HCT116 (cell line): ENCODE measurements at regions of chr3 and their contacts with region 1.

Region 1: DNA sequence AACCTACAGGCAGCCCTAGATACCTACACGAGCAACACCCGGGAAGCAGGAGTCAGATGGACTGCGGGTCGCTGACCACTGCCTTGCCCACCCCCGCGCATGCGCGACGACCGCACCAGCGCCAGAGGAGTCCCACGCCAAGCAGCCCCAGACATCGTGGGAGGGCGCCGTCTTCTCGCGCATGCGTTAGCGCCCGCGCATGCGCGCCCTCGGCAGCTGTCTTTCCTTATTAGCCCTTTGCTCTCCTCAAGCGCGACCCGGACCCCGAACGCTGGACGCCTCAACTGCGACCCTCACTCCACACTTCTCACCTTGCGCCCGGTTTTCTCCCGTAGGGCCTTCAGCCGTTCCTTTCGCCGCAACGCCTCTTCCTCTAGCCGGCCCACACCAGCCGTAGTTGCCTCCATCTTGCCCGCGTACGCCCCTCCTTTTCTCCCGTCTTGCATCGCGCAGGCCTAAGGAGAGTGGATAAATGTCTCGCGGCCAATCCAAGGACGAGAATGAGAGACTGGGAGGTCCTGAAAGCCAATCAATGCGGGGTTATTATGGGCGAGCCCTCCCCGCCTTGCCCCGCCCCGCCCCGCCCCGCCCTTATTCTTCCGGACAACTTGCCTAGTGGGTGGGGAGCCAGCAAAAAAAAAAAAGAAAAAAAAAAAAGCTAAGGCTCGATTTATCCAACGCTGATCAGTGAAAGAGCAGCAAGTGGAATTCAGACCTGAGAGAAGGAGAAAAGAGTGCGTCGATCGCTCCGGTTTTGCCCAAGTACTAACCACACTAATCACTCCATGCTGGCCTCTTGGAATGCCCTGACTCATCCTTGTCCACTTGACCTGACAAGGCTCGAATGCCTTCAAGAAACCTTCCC is at the start of gene CCDC12:
- DNase-seq: peak; percentile 97
- ATAC-seq: peak; percentile 78
- H3K4me3 ChIP-seq: peak within 1 kb of the TSS; percentile 69 to 74
- H3K27ac ChIP-seq: peak within 1 kb of the TSS; percentile 83
- H3K4me1 ChIP-seq: peaks cover 21 to 46% of the 10 kb centered on the region in 2 experiments
- H3K27me3 ChIP-seq: no peaks in the 10 kb centered on the region
- CTCF ChIP-seq: no peak
- POLR2A ChIP-seq: no peak
- RAD21 ChIP-seq: no peak
- total RNA-seq, gene CCDC12: 46.5 TPM

Region 2: DNA sequence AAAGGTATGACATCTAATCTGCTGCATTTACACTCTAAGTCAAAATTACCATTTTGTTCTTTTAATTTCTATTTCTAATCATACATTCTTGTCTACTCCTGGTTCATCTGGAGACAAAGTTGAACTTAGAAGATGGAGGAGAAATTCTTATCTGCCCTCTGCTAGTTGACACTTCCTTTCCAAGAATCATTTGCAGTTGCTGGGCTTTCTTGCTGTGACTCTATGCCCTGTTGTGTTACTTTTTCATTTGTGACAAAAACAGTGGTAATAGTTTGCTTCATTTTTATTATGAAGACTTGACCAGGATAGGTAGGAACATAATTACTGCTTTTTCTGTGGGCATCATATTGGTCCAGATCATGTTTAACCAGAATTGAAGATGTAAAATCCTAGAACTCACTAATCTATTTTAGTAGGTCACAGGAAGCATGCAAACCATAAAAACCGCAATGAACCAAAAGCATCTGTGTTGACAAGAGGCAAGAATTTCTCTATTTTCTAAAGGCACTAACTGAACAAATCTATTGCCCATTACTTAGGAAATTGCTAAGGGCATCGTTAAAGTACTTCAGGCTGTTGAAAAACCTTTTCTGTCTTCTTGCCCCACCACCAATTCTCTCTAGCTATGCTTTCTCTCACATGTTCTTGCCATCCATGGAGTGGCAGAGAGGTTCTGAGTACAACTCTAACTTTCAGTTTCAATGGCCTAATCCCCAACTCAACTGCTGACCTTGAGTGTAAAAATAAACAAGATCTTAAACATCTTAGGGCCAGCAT is 626.9 kb before region 1 on chr3:
- CTCF ChIA-PET with region 1: no interaction called
- POLR2A ChIA-PET with region 1: no interaction called
- RAD21 ChIA-PET with region 1: no interaction called
- intact Hi-C with region 1: no loop called
- DNase-seq: no peak
- ATAC-seq: no peak
- H3K4me3 ChIP-seq: no peak overlapping the region
- H3K27ac ChIP-seq: no peak overlapping the region
- H3K4me1 ChIP-seq: no peaks in the 10 kb centered on the region
- H3K27me3 ChIP-seq: peaks cover 36% of the 10 kb centered on the region
- CTCF ChIP-seq: no peak
- POLR2A ChIP-seq: no peak
- RAD21 ChIP-seq: no peak

Region 3: DNA sequence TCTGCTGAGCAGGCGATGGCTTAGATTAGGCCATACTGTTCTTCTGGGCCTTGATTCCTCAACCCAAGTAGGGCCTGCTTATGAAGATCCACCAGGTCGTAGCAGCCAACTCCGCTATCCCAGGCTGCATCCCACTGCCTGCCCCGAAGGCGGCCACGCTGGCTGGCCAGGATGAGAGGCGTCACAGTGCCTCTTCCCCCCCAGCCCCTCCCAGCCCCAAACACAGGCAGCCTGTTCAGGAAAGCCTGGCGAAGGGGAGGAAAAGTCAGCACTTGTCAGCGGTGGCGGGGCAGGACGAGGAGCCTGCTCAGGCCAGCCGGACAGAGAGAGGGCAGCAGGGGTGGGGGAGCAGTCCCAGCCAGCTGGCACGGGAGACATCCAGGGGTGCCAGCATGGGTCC is 87.9 kb before region 1 on chr3:
- CTCF ChIA-PET with region 1: no interaction called
- POLR2A ChIA-PET with region 1: no interaction called
- RAD21 ChIA-PET with region 1: no interaction called
- intact Hi-C with region 1: no loop called
- DNase-seq: no peak
- ATAC-seq: no peak
- H3K4me3 ChIP-seq: no peak overlapping the region
- H3K27ac ChIP-seq: no peak overlapping the region
- H3K4me1 ChIP-seq: peaks cover 0 to 13% of the 10 kb centered on the region in 2 experiments; a peak in 2 of 4 replicates
- H3K27me3 ChIP-seq: no peaks in the 10 kb centered on the region
- CTCF ChIP-seq: no peak
- POLR2A ChIP-seq: no peak
- RAD21 ChIP-seq: no peak

Region 4: GRCh38 chr3:46935168-46935858 is 41.2 kb before region 1 on chr3:
- CTCF ChIA-PET with region 1: interaction called, 5 read pairs
- POLR2A ChIA-PET with region 1: interaction called, 5 read pairs
- RAD21 ChIA-PET with region 1: interaction called in 1 of 2 experiments, 3 read pairs
- intact Hi-C with region 1: loop called (anchors 5 kb)
- DNase-seq: peak; percentile 65
- ATAC-seq: peak; percentile 94
- H3K4me3 ChIP-seq: peak overlapping the region in 1 of 2 experiments; percentile 28; a peak in 2 of 4 replicates
- H3K27ac ChIP-seq: peak overlapping the region; percentile 53
- H3K4me1 ChIP-seq: peaks cover 58 to 78% of the 10 kb centered on the region in 2 experiments
- H3K27me3 ChIP-seq: no peaks in the 10 kb centered on the region
- CTCF ChIP-seq: peak in 2 of 3 experiments; percentile 60 to 71; a peak in 4 of 6 replicates
- POLR2A ChIP-seq: no peak
- RAD21 ChIP-seq: peak; percentile 39

Region 5: DNA sequence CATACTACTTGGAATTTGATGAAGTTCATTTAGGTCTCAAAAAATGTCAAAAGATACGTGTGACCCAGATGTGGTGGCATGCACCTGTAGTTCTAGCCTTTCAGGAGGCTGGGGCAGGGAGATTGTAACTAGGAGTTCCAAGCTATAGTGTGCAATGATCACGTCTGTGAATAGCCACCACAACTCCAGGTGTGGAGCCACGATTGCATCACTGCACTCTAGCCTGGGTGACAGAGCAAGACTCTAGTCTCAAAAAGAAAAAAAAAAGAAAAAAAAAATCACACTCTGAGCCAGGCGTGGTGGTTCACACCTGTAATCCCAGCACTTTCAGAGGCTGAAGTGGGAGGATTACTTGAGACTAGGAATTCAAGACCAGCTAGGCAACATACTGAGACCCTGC is 1025.4 kb after region 1 on chr3:
- CTCF ChIA-PET with region 1: no interaction called
- POLR2A ChIA-PET with region 1: no interaction called
- RAD21 ChIA-PET with region 1: no interaction called
- intact Hi-C with region 1: no loop called
- DNase-seq: no peak
- ATAC-seq: no peak
- H3K4me3 ChIP-seq: no peak overlapping the region
- H3K27ac ChIP-seq: no peak overlapping the region
- H3K4me1 ChIP-seq: no peaks in the 10 kb centered on the region
- H3K27me3 ChIP-seq: no peaks in the 10 kb centered on the region
- CTCF ChIP-seq: no peak
- POLR2A ChIP-seq: no peak
- RAD21 ChIP-seq: no peak